RWPE1 (cell line): ENCODE measurements at regions of chr5 and their contacts with region 1.

Region 1: GRCh38 chr5:154708846-154709245 is 46.3 kb upstream of the LARP1 start:
- DNase-seq: peak; percentile 49
- H3K27ac ChIP-seq: no peak overlapping the region
- CTCF ChIP-seq: no peak

Region 2: GRCh38 chr5:154505611-154506010 is 203.2 kb before region 1 on chr5:
- CTCF ChIA-PET with region 1: no interaction called
- POLR2A ChIA-PET with region 1: no interaction called
- DNase-seq: no peak
- H3K27ac ChIP-seq: no peak overlapping the region
- CTCF ChIP-seq: no peak

Region 3: DNA sequence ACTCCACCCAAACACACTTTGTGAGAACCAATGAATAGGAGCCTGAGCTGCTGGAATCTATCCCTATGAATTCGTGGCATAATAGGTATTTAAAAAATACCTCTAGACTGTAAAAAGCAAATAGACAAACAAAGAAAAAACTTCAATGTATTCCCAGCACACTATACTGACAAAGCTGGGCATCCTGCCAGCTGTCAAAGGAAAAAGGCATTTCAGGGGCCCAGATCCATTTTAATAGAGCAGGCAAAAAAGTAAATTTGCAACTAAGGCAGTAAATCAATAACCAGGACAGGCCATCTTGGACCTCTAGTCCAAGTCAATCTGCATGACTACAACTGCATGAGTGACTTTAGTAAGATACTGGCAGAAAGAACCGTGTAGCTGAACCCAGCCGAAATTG is 20.8 kb after region 1 on chr5:
- CTCF ChIA-PET with region 1: interaction called, 10 read pairs
- POLR2A ChIA-PET with region 1: no interaction called
- DNase-seq: no peak
- H3K27ac ChIP-seq: no peak overlapping the region
- CTCF ChIP-seq: no peak

Region 4: GRCh38 chr5:155040984-155041653 is 332.3 kb after region 1 on chr5:
- CTCF ChIA-PET with region 1: no interaction called
- POLR2A ChIA-PET with region 1: no interaction called
- DNase-seq: no peak
- H3K27ac ChIP-seq: no peak overlapping the region
- CTCF ChIP-seq: no peak